ENCODE measurements at regions of chr9 and their contacts with region 1.

Region 1: GRCh38 chr9:127734747-127735529 is at the start of gene TOR2A:
- DNase-seq: peak; percentile 93
- ATAC-seq: peak; percentile 91
- H3K4me3 ChIP-seq: peak within 1 kb of the TSS; percentile 57 to 77 (median 74)
- H3K27ac ChIP-seq: peak within 1 kb of the TSS; percentile 71
- H3K4me1 ChIP-seq: peaks cover 29% of the 10 kb centered on the region
- H3K27me3 ChIP-seq: peaks cover 4 to 19% of the 10 kb centered on the region in 2 experiments; a peak in 4 of 5 replicates
- CTCF ChIP-seq: peak; percentile 99
- EP300 ChIP-seq: peak; percentile 13 to 29; a peak in 1 of 4 replicates
- POLR2A ChIP-seq: peak; percentile 51 to 70
- RAD21 ChIP-seq: peak; percentile 90
- total RNA-seq, gene TOR2A: 5.5 and 7.2 TPM in 2 replicates

Region 2: DNA sequence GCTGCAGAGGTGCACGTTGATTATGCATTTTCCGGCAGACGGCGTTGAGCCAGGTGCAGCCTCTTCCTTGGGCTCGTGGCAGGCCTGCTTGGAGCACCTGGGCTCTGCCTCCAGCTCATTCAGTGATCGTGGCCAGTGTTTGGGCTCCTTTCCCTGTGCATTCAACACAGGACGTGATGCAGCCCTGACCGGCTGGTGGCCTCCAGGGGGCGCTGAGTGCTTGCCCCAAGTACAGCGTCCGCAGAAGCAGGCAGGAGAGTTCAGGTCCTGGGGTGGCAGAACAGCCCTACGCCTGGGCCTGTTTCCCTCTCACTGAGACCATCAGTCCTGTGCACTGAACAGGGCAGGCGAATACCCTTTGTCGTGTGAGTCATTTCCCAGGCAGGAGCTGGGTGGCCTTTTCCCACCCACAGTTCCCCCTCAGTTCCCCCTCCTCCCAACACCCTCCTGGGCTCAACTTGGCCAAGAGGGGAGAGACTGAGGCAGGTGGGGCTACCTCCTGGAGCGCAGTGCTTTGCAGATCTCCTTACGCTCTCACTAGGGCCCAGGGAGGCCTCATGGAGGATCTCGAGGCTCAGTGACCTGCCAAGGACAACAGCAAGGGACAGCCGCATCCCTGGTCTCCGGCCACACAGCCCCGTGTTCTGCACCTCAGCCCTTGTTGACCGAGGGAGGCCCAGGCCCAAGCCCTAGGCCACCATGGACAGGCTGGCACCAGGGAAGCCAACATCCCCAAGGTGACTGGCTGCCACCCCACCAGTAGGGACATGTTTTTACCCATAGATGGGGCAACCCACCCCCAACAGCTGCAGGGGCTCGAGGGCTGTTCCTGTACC is 230.8 kb before region 1 on chr9:
- CTCF ChIA-PET with region 1: no interaction called
- POLR2A ChIA-PET with region 1: no interaction called
- in situ Hi-C with region 1: loop called (anchors 10 kb)
- intact Hi-C with region 1: no loop called
- DNase-seq: peak; percentile 70
- ATAC-seq: peak; percentile 84
- H3K4me3 ChIP-seq: no peak overlapping the region
- H3K27ac ChIP-seq: no peak overlapping the region
- H3K4me1 ChIP-seq: no peaks in the 10 kb centered on the region
- H3K27me3 ChIP-seq: no peaks in the 10 kb centered on the region
- CTCF ChIP-seq: peak; percentile 97
- EP300 ChIP-seq: no peak
- POLR2A ChIP-seq: no peak
- RAD21 ChIP-seq: peak; percentile 95

Region 3: DNA sequence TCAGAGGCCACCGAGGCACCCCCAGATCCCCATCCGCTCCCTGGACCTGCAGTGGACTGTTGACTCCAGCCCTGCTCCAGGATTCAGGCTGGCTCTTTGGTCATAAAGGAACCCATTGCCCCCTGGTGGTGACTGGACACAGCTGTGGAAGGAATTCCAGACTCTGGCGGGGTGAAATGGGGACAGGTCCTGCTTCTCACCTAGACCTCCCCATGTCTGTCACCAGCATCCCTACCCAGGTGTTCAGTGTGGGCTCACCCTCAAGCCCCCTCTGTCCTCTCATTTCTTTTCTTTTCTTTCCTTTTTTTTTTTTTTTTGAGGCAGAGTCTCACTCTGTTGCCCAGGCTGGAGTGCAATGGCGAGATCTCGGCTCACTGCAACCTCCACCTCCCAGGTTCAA is 148.4 kb before region 1 on chr9:
- CTCF ChIA-PET with region 1: interaction called, 33 read pairs
- POLR2A ChIA-PET with region 1: interaction called, 7 read pairs
- in situ Hi-C with region 1: no loop called
- intact Hi-C with region 1: loop called (anchors 1 kb)
- DNase-seq: peak; percentile 75
- ATAC-seq: peak; percentile 94
- H3K4me3 ChIP-seq: no peak overlapping the region
- H3K27ac ChIP-seq: no peak overlapping the region
- H3K4me1 ChIP-seq: peaks cover 25% of the 10 kb centered on the region
- H3K27me3 ChIP-seq: no peaks in the 10 kb centered on the region
- CTCF ChIP-seq: peak; percentile 96
- EP300 ChIP-seq: no peak
- POLR2A ChIP-seq: no peak
- RAD21 ChIP-seq: peak; percentile 90

Region 4: DNA sequence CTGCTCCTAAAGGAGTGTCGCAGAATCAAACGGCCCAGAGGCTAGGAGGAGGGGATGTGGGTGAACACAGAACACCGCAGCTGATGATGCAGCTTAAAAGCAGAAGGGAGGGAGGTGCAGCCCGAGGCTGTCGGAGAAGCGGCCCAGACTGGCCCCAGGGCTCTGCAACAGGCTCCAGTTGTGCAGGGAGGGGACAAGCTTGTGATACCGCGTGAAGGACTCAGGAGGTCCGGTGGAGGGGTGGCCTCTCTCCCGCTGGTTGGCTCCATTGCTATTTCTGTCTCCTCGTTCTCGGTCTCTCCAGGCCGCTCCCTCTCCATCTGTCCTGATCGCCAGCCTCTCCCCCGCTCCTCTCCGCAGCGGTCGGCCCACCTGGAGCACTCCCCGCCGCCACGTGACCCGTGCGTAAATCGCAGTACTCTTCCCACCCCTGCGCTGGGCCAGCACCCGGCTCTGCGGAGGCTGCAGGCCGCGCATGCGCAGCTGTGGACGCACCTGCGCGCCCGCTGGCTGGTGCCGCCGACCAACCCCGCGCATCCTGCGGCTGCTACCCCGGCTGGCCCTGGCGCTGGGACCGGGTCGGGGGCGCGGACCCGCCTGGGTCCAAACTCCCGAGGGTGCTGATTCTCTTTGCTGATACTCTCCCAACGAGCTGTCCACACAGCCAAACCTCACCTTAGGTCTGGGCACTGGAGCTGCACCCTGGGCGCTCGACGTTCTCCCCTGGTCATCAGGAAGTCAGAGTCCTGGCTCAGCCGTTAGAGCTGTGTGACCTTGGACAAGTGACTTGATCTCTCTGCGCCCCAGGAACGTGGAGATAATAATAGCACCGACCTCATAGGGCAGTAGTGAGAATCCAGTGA is 126.6 kb before region 1 on chr9:
- CTCF ChIA-PET with region 1: no interaction called
- POLR2A ChIA-PET with region 1: interaction called, 10 read pairs
- in situ Hi-C with region 1: no loop called
- intact Hi-C with region 1: no loop called
- DNase-seq: peak; percentile 66
- ATAC-seq: peak; percentile 69
- H3K4me3 ChIP-seq: peak overlapping the region; percentile 18 to 77 (median 42); a peak in 5 of 6 replicates
- H3K27ac ChIP-seq: peak overlapping the region; percentile 50
- H3K4me1 ChIP-seq: peaks cover 37% of the 10 kb centered on the region
- H3K27me3 ChIP-seq: peaks cover 0 to 13% of the 10 kb centered on the region in 2 experiments; a peak in 3 of 5 replicates
- CTCF ChIP-seq: 0 out of 2 replicates have a peak, but pooled peaks have one; percentile 5
- EP300 ChIP-seq: no peak
- POLR2A ChIP-seq: peak; percentile 29 to 48; a peak in 1 of 4 replicates
- RAD21 ChIP-seq: no peak

Region 5: GRCh38 chr9:127715394-127716337 is 19.3 kb before region 1 on chr9 and contains the starts of genes PTRH1 and TTC16:
- CTCF ChIA-PET with region 1: no interaction called
- POLR2A ChIA-PET with region 1: interaction called, 11 read pairs
- in situ Hi-C with region 1: no loop called
- intact Hi-C with region 1: no loop called
- DNase-seq: peak; percentile 89
- ATAC-seq: peak; percentile 91
- H3K4me3 ChIP-seq: peak within 1 kb of the TSS; percentile 77 to 90 (median 82)
- H3K27ac ChIP-seq: peak within 1 kb of the TSS; percentile 19
- H3K4me1 ChIP-seq: peaks cover 38% of the 10 kb centered on the region
- H3K27me3 ChIP-seq: peaks cover 0 to 6% of the 10 kb centered on the region in 2 experiments; a peak in 2 of 5 replicates
- CTCF ChIP-seq: no peak
- EP300 ChIP-seq: no peak
- POLR2A ChIP-seq: peak in 1 of 2 experiments; percentile 50; a peak in 3 of 4 replicates
- RAD21 ChIP-seq: no peak
- total RNA-seq, gene PTRH1: 7.6 and 10.4 TPM in 2 replicates
- total RNA-seq, gene TTC16: not detected in 2 replicates

Region 6: GRCh38 chr9:127785023-127785932 is 50.3 kb after region 1 on chr9:
- CTCF ChIA-PET with region 1: interaction called, 10 read pairs
- POLR2A ChIA-PET with region 1: interaction called, 5 read pairs
- in situ Hi-C with region 1: loop called (anchors 5 kb)
- intact Hi-C with region 1: loop called (anchors 2 kb)
- DNase-seq: peak; percentile 51
- ATAC-seq: peak; percentile 44
- H3K4me3 ChIP-seq: peak overlapping the region; percentile 76 to 99 (median 94); a peak in 5 of 6 replicates
- H3K27ac ChIP-seq: peak overlapping the region; percentile 46
- H3K4me1 ChIP-seq: peaks cover 28% of the 10 kb centered on the region
- H3K27me3 ChIP-seq: 0 out of 5 replicates have a peak, but pooled peaks cover 1 to 13% of the 10 kb centered on the region in 2 experiments
- CTCF ChIP-seq: peak; percentile 93
- EP300 ChIP-seq: no peak
- POLR2A ChIP-seq: peak in 1 of 2 experiments; percentile 26; a peak in 1 of 4 replicates
- RAD21 ChIP-seq: peak; percentile 79

Region 7: DNA sequence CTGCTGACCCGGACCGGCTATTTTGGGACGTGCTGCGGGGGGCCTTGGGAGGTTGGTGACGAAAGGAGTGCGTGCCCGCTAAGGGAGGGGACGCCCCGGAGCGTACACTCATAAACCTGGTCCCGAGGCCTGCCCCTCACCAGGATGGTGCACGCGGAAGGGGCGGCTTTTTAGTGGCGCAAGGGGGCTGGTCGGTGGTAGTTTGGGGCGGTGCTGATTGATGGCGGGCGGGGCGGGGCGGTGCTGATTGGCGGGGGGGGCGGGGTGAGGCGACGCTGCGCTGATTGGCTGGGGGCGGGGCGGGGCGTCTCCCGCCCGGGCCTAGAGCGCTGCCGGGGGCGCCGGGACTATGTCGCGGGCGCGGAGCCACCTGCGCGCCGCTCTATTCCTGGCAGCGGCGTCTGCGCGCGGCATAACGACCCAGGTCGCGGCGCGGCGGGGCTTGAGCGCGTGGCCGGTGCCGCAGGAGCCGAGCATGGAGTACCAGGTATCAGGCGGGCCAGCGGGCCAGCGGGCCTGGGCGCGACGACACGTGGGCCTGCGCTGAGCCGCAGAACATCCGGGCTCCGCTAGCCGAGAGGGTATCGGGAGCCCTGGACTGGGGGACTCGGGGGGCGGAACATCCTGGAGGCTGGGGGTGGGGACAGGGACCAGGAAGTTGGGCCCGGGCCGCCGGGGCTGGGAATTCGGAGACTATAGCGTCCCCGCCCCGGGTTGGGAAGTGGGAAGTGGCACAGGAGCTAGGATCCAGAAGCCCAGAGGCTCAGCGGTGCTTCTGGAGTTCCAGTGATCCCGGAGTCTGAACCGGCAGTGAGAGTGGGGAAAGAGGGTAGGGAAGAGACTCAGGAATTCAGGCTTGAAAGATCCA is 67.9 kb after region 1 on chr9 and contains the start of gene FPGS:
- CTCF ChIA-PET with region 1: no interaction called
- POLR2A ChIA-PET with region 1: no interaction called
- in situ Hi-C with region 1: no loop called
- intact Hi-C with region 1: loop called (anchors 2 kb)
- DNase-seq: peak; percentile 75
- ATAC-seq: peak; percentile 86
- H3K4me3 ChIP-seq: peak within 1 kb of the TSS; percentile 78 to 93 (median 84)
- H3K27ac ChIP-seq: peak within 1 kb of the TSS; percentile 86
- H3K4me1 ChIP-seq: peaks cover 45% of the 10 kb centered on the region
- H3K27me3 ChIP-seq: no peaks in the 10 kb centered on the region; a peak in 1 of 5 replicates
- CTCF ChIP-seq: no peak; the same call in 1 of the 2 replicates
- EP300 ChIP-seq: no peak
- POLR2A ChIP-seq: peak; percentile 67 to 72
- RAD21 ChIP-seq: peak; percentile 43; the same call in 1 of the 2 replicates
- total RNA-seq, gene FPGS: 20.3 and 35.6 TPM in 2 replicates

Measured in HepG2 (cell line).